Gastrocnemius medialis (tissue), 4 donors: ENCODE measurements at regions of chr10 and their contacts with region 1.

Region 1: DNA sequence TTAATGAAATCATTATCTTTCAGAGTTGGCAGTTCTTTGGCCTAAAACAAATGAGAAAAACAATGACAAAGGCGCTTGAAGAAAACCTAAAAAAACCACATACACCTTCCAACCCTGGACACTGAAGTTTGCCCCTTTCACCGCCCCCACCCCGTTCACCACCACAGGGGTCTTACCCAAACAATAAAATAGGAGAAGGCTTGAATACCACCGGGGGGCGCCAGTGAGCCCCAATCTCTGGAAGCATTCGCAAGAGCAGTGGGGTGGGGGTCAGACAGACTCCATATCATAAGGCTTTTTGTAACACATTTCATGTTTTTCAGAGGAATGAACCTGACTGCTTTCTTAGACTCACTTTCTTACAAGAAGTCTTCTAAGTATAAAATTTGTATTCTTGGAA is 163.6 kb downstream of the PIP4K2A start:
- DNase-seq: peak in 1 of 2 donors; percentile 34
- ATAC-seq: no peak
- H3K4me3 ChIP-seq: no peak overlapping the region
- H3K27ac ChIP-seq: peak overlapping the region in 2 of 4 donors; percentile 76 to 83
- H3K4me1 ChIP-seq: peaks cover 33 to 35% of the 10 kb centered on the region in 2 donors
- H3K27me3 ChIP-seq: no peaks in the 10 kb centered on the region
- CTCF ChIP-seq: peak; percentile 29 to 54 (median 47)
- POLR2A ChIP-seq: no peak

Region 2: GRCh38 chr10:21533467-21534279 is 1017.1 kb before region 1 on chr10 and contains the start of gene MLLT10:
- in situ Hi-C with region 1: no loop called
- intact Hi-C with region 1: loop called (anchors 5 kb)
- DNase-seq: peak; percentile 89 to 95
- ATAC-seq: peak; percentile 74 to 75
- H3K4me3 ChIP-seq: peak within 1 kb of the TSS; percentile 77 to 98 (median 88)
- H3K27ac ChIP-seq: peak within 1 kb of the TSS; percentile 90 to 100 (median 98)
- H3K4me1 ChIP-seq: peaks cover 25% of the 10 kb centered on the region in 2 donors
- H3K27me3 ChIP-seq: no peaks in the 10 kb centered on the region
- CTCF ChIP-seq: peak; percentile 33 to 54 (median 46)
- POLR2A ChIP-seq: peak; percentile 85 to 90
- total RNA-seq, gene MLLT10: 13.6 to 26.6 (median 21.6) TPM

Region 3: DNA sequence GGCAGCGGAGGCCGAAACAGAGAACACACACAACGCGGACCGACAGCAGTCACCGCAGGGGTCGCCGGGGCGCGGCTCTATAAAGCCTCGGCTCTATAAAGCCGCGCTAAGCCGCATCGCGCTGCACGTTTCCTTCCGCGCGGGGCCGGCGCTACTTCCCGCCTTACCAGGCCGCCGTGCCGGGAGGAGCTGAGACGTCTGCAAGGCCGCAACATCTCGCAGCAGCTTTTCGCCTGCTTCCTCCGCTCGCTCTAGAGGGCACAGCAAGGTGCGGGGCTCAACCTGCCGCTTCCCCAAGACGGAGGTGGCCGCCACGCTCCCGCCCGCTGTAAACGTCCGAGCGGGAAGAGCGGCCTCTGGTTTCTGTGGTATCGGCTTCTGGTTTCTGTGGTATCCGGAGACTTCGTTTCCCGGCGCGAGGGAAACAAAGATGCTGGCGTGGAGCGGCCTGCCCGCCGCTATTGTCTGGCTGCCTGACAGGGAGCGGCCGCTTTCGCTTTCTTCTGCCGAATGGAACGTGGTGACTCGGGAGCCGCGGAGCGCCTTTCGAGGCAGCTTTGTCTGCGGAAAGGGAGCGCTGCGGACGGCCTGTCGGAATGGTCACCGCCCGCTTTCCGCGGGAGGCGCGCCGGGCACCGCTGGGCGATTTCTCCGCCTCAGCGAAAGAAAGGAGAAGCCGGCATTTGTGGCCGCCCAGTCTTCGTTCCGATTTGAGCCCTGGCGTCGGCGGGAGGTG is 113.7 kb before region 1 on chr10:
- in situ Hi-C with region 1: no loop called
- intact Hi-C with region 1: loop called (anchors 5 kb)
- DNase-seq: peak; percentile 69 to 86
- ATAC-seq: peak; percentile 79 to 89
- H3K4me3 ChIP-seq: peak overlapping the region; percentile 70 to 95 (median 78)
- H3K27ac ChIP-seq: peak overlapping the region; percentile 86 to 95 (median 86)
- H3K4me1 ChIP-seq: peaks cover 12 to 19% of the 10 kb centered on the region in 2 donors
- H3K27me3 ChIP-seq: no peaks in the 10 kb centered on the region
- CTCF ChIP-seq: no peak
- POLR2A ChIP-seq: peak; percentile 71 to 76

Region 4: DNA sequence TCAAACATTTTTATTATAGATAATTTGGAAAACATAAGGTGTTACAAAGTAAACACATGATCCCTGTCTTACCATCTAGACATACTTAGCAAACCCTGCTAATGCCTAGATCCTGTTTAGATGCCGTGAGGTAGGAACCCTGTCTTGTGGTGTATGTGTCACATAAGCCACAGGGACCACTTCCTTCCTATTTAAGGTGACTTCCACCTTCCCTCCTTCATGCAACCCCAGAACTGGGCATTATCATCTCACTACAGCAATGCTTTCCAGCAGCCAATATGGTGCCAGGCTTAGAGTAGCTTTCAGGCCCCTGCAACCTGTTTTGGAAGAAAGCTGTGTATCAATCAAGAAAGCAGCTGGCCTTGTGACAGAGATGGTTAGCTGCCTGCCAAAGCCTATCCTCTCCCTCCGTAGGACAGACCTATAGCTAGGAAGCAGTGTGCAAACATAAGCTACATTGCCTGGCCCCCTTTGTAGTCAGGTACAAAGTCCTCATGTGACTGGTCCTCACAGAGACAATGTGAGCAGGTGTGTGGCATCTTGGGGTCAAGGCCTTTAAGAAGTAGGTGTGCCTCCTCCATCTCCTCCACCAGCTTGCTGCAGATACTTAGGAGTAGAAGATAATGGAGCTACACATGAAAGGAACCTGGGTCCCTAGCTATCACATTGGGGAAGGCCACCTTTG is 58.7 kb before region 1 on chr10:
- in situ Hi-C with region 1: no loop called
- intact Hi-C with region 1: no loop called
- DNase-seq: no peak
- ATAC-seq: no peak
- H3K4me3 ChIP-seq: no peak overlapping the region
- H3K27ac ChIP-seq: no peak overlapping the region
- H3K4me1 ChIP-seq: no peaks in the 10 kb centered on the region
- H3K27me3 ChIP-seq: no peaks in the 10 kb centered on the region
- CTCF ChIP-seq: no peak
- POLR2A ChIP-seq: no peak

Region 5: DNA sequence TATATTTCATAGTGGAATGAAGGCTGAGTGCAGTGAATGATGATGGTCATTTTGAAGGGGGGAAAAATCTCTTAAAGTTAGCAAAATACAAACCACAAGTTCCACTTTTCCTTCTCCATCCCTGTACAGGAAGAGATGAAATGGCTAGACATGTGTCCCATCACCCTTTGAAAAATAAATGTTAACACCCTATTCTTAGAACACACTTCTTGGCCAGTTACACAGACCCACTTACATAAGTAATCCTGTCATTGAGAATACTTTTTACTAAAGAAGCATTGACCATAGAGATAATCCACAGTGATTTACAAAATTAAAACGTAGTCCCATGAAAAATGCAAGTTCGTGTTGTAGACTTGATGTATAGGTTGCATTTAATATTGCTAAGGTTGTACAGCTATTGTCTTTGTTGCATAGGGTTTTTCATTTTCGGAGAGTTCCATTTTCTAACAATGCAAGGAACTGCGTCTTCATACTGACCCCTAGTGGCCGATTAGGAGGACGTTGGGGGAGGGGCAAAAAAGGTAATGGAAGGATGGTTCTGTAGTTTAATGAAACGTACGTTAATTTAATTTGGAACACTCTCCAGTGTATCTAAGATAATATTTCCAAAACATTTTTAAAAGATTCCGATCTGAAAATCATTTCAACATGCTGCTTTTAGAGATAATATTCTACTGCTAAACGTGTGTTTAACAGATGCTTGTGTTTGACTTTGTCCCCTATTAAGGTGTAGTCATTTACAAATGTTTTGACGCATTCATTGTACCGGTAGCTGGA is 438.0 kb after region 1 on chr10:
- in situ Hi-C with region 1: loop called in 2 of 4 experiments (anchors 10 to 25 kb)
- intact Hi-C with region 1: loop called (anchors 10 kb)
- DNase-seq: peak; percentile 32 to 35
- ATAC-seq: peak; percentile 71 to 77
- H3K4me3 ChIP-seq: no peak overlapping the region
- H3K27ac ChIP-seq: no peak overlapping the region
- H3K4me1 ChIP-seq: peaks cover 0 to 4% of the 10 kb centered on the region in 2 donors
- H3K27me3 ChIP-seq: no peaks in the 10 kb centered on the region
- CTCF ChIP-seq: peak; percentile 78 to 90 (median 85)
- POLR2A ChIP-seq: no peak

Region 6: GRCh38 chr10:23067939-23068775 is 517.4 kb after region 1 on chr10:
- in situ Hi-C with region 1: no loop called
- intact Hi-C with region 1: loop called (anchors 5 kb)
- DNase-seq: peak; percentile 20 to 46
- ATAC-seq: peak; percentile 49 to 62
- H3K4me3 ChIP-seq: no peak overlapping the region
- H3K27ac ChIP-seq: no peak overlapping the region
- H3K4me1 ChIP-seq: peaks cover 22 to 32% of the 10 kb centered on the region in 2 donors
- H3K27me3 ChIP-seq: no peaks in the 10 kb centered on the region
- CTCF ChIP-seq: peak in 4 of 5 experiments; percentile 60 to 82 (median 70)
- POLR2A ChIP-seq: no peak

Region 7: GRCh38 chr10:23095404-23095965 is 544.8 kb after region 1 on chr10 and contains the start of gene MSRB2:
- in situ Hi-C with region 1: no loop called
- intact Hi-C with region 1: loop called (anchors 10 kb)
- DNase-seq: peak; percentile 92 to 96
- ATAC-seq: peak; percentile 95 to 96
- H3K4me3 ChIP-seq: peak within 1 kb of the TSS; percentile 76 to 89 (median 81)
- H3K27ac ChIP-seq: peak within 1 kb of the TSS; percentile 81 to 95 (median 92)
- H3K4me1 ChIP-seq: peaks cover 29 to 33% of the 10 kb centered on the region in 2 donors
- H3K27me3 ChIP-seq: no peaks in the 10 kb centered on the region
- CTCF ChIP-seq: no peak
- POLR2A ChIP-seq: peak; percentile 90 to 92
- total RNA-seq, gene MSRB2: 24.3 to 43.5 (median 29.4) TPM

Region 8: DNA sequence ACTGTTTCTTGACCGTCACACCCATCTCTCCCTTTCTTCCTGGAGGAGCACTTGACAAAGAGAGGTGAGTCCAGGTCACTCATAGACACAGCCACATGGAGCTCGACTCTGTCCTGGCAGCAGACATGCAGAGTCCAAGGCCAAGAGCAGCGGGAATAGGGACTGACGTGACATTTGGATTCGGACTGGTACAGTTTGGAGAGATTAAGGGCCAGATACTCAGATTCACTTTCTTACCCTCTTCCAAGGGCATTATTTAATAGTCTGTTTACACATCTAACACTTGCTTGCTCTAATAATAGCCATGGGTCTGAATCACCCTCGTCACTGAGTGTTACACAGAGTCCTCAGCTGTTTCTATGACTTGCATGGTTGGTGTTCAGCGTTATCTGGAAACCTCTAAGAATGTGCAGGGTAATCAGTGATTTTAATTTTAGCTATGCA is 849.0 kb after region 1 on chr10:
- in situ Hi-C with region 1: no loop called
- intact Hi-C with region 1: loop called (anchors 10 kb)
- DNase-seq: peak; percentile 89 to 94
- ATAC-seq: peak; percentile 96
- H3K4me3 ChIP-seq: no peak overlapping the region
- H3K27ac ChIP-seq: peak overlapping the region; percentile 74 to 86 (median 82)
- H3K4me1 ChIP-seq: peaks cover 26 to 37% of the 10 kb centered on the region in 2 donors
- H3K27me3 ChIP-seq: no peaks in the 10 kb centered on the region
- CTCF ChIP-seq: no peak
- POLR2A ChIP-seq: peak in 1 of 2 donors; percentile 48